CD4-positive, alpha-beta T cell (primary cell): ENCODE measurements at regions of chr11 and their contacts with region 1.

Region 1: DNA sequence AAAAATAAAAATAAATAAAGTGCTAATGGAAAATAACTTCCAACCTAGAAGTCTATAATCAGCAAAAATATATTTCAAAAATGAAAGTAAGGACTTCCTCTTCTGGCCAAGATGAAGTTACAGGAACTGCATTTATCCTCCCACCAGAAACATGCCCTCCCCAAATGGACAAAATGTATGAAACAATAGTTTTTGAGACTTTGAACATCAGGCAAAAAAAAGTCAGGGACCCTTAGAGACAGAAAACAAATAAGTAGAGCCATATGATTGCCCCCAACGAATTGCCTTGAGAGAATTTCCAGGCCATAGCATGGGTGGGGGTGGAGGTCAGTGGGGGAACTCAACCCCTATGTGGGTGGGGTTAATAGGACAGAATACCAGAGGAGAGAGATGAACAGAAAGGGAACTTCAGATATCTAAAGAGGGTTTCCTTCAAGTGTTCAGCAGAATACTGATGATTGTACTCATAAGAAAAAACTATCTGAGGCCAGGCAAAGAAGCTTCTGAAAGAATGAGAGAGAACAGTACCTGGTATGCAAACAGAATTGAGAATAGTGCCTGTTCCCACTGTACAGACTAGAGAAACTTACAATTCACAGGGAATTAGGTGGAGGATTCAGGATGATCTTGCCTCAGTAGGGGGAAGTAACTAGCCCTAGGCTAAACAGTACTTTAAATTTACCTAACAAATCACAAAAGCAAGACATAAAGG is 26.6 kb upstream of the IL10RA start:
- DNase-seq: no peak
- ATAC-seq: no peak
- H3K4me3 ChIP-seq: no peak overlapping the region
- H3K4me3 Mint-ChIP-seq: no peak overlapping the region
- H3K27ac ChIP-seq: no peak overlapping the region
- H3K27ac Mint-ChIP-seq: no peak overlapping the region
- H3K4me1 ChIP-seq: peaks cover 5% of the 10 kb centered on the region
- H3K4me1 Mint-ChIP-seq: peaks cover 73% of the 10 kb centered on the region
- H3K27me3 ChIP-seq: no peaks in the 10 kb centered on the region
- H3K27me3 Mint-ChIP-seq: no peaks in the 10 kb centered on the region
- CTCF ChIP-seq: no peak

Region 2: DNA sequence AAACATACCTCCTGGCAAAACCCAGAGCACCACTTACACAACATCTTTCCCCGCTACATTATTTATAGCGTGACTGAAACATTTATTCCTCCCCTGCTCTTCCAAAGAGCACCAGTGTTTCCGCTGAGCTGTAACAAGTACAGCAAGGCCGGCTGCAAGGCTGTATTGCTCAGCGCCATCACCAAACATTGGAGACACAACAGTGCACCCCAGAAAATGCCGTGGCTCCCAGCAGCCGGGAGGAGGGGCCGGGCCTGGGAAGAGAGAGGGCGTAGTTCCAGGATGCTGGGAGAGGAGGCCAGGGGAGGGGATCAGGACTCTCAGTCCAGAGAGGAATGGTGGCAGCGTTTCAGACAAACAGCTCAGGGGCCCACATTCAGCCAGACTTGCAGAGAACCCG is 295.8 kb before region 1 on chr11:
- CTCF ChIA-PET with region 1: no interaction called
- POLR2A ChIA-PET with region 1: no interaction called
- intact Hi-C with region 1: no loop called
- DNase-seq: no peak
- ATAC-seq: no peak
- H3K4me3 ChIP-seq: no peak overlapping the region
- H3K4me3 Mint-ChIP-seq: no peak overlapping the region
- H3K27ac ChIP-seq: no peak overlapping the region
- H3K27ac Mint-ChIP-seq: no peak overlapping the region
- H3K4me1 ChIP-seq: no peaks in the 10 kb centered on the region
- H3K4me1 Mint-ChIP-seq: no peaks in the 10 kb centered on the region
- H3K27me3 ChIP-seq: no peaks in the 10 kb centered on the region
- H3K27me3 Mint-ChIP-seq: no peaks in the 10 kb centered on the region
- CTCF ChIP-seq: no peak

Region 3: DNA sequence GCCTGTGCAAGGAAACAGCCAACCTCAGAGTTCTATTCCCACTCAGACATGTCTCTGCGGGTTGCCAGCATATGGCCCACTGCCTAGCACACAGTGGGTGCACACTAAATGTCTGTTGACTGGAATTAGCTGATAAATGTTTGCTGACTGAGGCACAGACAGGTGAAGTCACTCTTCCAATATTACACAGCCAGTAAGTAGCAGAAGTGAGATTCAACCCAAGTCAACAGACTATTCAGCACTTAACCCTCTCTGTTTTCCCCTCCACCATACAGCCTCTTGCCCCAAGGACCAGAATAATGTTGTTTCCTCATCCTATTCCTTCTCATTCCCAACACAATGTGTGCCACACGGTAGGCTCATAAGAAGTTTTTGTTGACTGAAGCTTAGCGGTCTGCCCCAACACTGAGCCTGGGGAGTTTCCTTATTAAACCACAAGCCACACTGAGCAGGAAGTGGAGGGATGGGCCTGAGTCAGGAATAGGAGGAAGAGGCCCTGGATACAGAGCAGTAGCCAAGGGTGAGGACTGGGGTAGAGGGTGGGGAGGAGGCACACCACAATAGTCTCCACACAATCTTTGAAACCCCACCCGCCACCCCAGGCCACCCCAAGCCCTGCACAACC is 10.9 kb after region 1 on chr11:
- CTCF ChIA-PET with region 1: no interaction called
- POLR2A ChIA-PET with region 1: interaction called, 6 read pairs
- intact Hi-C with region 1: loop called in 1 of 2 experiments (anchors 2 kb)
- DNase-seq: peak in 5 of 14 experiments; percentile 33 to 79 (median 71)
- ATAC-seq: peak; percentile 79
- H3K4me3 ChIP-seq: no peak overlapping the region
- H3K4me3 Mint-ChIP-seq: peak overlapping the region; percentile 44
- H3K27ac ChIP-seq: no peak overlapping the region
- H3K27ac Mint-ChIP-seq: peak overlapping the region; percentile 42
- H3K4me1 ChIP-seq: peaks cover 59% of the 10 kb centered on the region
- H3K4me1 Mint-ChIP-seq: peaks cover 69% of the 10 kb centered on the region
- H3K27me3 ChIP-seq: no peaks in the 10 kb centered on the region
- H3K27me3 Mint-ChIP-seq: no peaks in the 10 kb centered on the region
- CTCF ChIP-seq: no peak

Region 4: DNA sequence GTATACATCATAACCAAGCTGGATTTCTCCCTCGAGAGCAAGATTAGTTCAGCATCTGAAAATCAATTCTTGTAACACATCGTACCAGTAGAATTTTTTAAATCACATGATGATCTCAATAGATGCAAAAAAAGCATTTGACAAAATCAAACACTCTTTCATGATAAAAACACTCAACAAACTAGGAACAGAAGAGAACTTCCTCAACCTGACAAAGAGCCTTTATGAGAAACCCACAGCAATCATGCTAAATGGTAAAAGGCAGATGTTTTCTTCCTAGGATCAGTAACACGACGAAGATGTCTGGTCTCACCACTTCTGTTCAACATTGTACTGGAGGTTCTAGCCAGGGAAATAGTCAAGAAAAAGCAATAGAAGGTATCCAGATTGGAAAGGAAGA is 83.2 kb after region 1 on chr11:
- CTCF ChIA-PET with region 1: no interaction called
- POLR2A ChIA-PET with region 1: no interaction called
- intact Hi-C with region 1: no loop called
- DNase-seq: peak in 1 of 14 experiments; percentile 11
- ATAC-seq: no peak
- H3K4me3 ChIP-seq: no peak overlapping the region
- H3K4me3 Mint-ChIP-seq: peak overlapping the region; percentile 5
- H3K27ac ChIP-seq: peak overlapping the region in 1 of 2 donors; percentile 23
- H3K27ac Mint-ChIP-seq: peak overlapping the region; percentile 63
- H3K4me1 ChIP-seq: peaks cover 50% of the 10 kb centered on the region
- H3K4me1 Mint-ChIP-seq: peaks cover 76% of the 10 kb centered on the region
- H3K27me3 ChIP-seq: no peaks in the 10 kb centered on the region
- H3K27me3 Mint-ChIP-seq: no peaks in the 10 kb centered on the region
- CTCF ChIP-seq: no peak